ENCODE measurements at regions of chr12 and their contacts with region 1.

Region 1: GRCh38 chr12:105874121-105874520 is 264.6 kb downstream of the NUAK1 start:
- DNase-seq: no peak
- H3K4me3 ChIP-seq: no peak overlapping the region
- H3K27ac ChIP-seq: no peak overlapping the region
- H3K4me1 ChIP-seq: no peaks in the 10 kb centered on the region
- H3K27me3 ChIP-seq: no peaks in the 10 kb centered on the region
- CTCF ChIP-seq: no peak
- EP300 ChIP-seq: no peak
- POLR2A ChIP-seq: no peak

Region 2: DNA sequence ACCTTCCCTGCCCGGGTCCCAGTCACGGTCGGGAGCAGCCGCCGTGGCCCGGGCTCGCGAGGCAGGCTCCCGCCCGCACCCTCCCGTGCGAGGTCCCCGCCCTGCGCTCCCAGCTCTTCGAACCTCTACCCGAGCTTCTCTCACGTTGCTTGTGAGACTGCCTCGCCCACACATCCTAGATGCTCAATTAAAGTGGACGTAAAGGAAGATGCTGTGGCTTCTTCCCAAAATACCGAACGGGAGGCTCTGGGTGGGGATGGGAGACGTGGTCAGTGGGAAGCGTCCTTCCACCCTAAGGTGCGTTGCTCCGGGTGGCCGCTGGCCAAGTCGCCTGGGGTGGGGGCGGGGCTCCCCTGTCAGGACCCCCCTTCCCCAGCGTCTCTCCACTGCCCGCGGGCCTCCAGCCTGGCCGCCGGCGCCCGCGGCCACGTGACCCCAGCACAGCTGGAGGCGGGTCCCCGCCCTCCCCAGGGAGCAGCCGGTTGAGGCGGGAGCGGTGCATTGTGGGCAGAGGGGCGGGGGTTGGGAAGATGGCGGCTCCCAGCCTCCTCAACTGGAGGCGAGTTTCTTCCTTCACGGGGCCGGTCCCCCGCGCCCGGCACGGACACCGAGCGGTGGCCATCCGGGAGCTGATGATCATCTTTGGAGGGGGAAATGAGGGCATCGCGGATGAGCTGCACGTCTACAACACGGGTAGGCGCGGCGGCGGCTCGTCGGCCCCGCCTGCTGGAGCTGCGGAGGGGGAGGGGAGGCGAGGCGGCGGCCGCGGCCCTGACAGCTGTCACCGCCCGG is 1809.9 kb before region 1 on chr12 and contains the start of gene HCFC2:
- intact Hi-C with region 1: no loop called
- DNase-seq: peak; percentile 90 to 94 (median 93)
- H3K4me3 ChIP-seq: peak within 1 kb of the TSS; percentile 82
- H3K27ac ChIP-seq: peak within 1 kb of the TSS; percentile 31 to 72
- H3K4me1 ChIP-seq: peaks cover 6% of the 10 kb centered on the region
- H3K27me3 ChIP-seq: no peaks in the 10 kb centered on the region
- CTCF ChIP-seq: no peak
- EP300 ChIP-seq: no peak
- POLR2A ChIP-seq: peak; percentile 59
- total RNA-seq, gene HCFC2: 17.2 to 24.6 (median 23.5) TPM

Region 3: DNA sequence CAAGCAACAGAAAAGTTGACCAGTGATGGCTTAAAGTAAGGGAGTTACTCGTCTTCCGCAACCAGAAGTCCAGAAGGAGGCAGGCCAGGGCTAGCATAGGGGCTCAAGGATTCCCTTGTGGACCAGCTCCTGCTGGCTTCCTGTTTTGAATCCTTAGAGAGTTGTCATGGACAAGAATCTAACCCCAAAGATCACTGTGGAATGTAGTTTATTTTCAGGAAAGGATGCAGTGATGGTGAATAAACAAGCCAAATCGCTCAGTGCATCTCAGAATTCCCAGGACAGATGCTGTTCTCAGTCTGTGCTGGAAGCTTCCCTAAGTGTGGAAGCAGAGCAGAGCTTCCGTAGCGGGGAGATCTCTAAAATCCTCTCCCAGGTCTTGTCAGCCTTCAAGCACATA is 232.4 kb before region 1 on chr12:
- intact Hi-C with region 1: no loop called
- DNase-seq: no peak
- H3K4me3 ChIP-seq: no peak overlapping the region
- H3K27ac ChIP-seq: no peak overlapping the region
- H3K4me1 ChIP-seq: no peaks in the 10 kb centered on the region
- H3K27me3 ChIP-seq: no peaks in the 10 kb centered on the region
- CTCF ChIP-seq: no peak
- EP300 ChIP-seq: no peak
- POLR2A ChIP-seq: no peak

Region 4: GRCh38 chr12:105948331-105948730 is 74.2 kb after region 1 on chr12:
- intact Hi-C with region 1: no loop called
- DNase-seq: no peak
- H3K4me3 ChIP-seq: no peak overlapping the region
- H3K27ac ChIP-seq: no peak overlapping the region
- H3K4me1 ChIP-seq: no peaks in the 10 kb centered on the region
- H3K27me3 ChIP-seq: no peaks in the 10 kb centered on the region
- CTCF ChIP-seq: no peak
- EP300 ChIP-seq: no peak
- POLR2A ChIP-seq: no peak

Region 5: GRCh38 chr12:106025129-106025528 is 151.0 kb after region 1 on chr12:
- intact Hi-C with region 1: loop called in 1 of 4 experiments (anchors 5 kb)
- DNase-seq: no peak
- H3K4me3 ChIP-seq: no peak overlapping the region
- H3K27ac ChIP-seq: no peak overlapping the region
- H3K4me1 ChIP-seq: no peaks in the 10 kb centered on the region
- H3K27me3 ChIP-seq: no peaks in the 10 kb centered on the region
- CTCF ChIP-seq: no peak
- EP300 ChIP-seq: no peak
- POLR2A ChIP-seq: no peak

Region 6: DNA sequence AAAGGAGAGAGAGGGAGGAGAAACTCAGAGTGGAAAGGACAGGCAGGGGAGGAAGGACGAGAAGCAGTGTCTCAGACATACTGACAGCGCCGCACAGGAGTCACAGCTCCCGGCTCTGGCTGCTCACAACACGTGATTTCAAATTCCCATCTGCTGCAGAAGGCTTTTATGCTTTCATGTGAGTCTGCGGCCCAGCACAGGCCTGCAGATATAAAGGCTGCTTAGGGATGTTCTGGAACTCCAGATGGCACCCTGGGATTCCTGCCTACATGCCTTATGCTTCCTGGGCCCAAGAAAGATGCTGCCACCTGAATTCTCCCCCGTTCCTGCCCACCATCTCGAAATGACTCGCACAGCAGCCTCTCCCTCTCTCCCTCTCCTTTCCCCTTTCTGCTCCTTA is 175.0 kb after region 1 on chr12:
- intact Hi-C with region 1: no loop called
- DNase-seq: no peak
- H3K4me3 ChIP-seq: no peak overlapping the region
- H3K27ac ChIP-seq: no peak overlapping the region
- H3K4me1 ChIP-seq: no peaks in the 10 kb centered on the region
- H3K27me3 ChIP-seq: no peaks in the 10 kb centered on the region
- CTCF ChIP-seq: no peak
- EP300 ChIP-seq: no peak
- POLR2A ChIP-seq: no peak

Measured in ovary (tissue), 10 donors.